Esophagus muscularis mucosa (tissue), 4 donors: ENCODE measurements at regions of chr9 and their contacts with region 1.

Region 1: GRCh38 chr9:69317894-69318293 is 7.1 kb upstream of the ENTREP1 start:
- DNase-seq: no peak
- H3K4me3 ChIP-seq: no peak overlapping the region
- H3K27ac ChIP-seq: no peak overlapping the region
- H3K4me1 ChIP-seq: peaks cover 0 to 9% (median 4%) of the 10 kb centered on the region in 4 donors
- H3K27me3 ChIP-seq: no peaks in the 10 kb centered on the region
- CTCF ChIP-seq: no peak
- EP300 ChIP-seq: no peak
- POLR2A ChIP-seq: no peak

Region 2: DNA sequence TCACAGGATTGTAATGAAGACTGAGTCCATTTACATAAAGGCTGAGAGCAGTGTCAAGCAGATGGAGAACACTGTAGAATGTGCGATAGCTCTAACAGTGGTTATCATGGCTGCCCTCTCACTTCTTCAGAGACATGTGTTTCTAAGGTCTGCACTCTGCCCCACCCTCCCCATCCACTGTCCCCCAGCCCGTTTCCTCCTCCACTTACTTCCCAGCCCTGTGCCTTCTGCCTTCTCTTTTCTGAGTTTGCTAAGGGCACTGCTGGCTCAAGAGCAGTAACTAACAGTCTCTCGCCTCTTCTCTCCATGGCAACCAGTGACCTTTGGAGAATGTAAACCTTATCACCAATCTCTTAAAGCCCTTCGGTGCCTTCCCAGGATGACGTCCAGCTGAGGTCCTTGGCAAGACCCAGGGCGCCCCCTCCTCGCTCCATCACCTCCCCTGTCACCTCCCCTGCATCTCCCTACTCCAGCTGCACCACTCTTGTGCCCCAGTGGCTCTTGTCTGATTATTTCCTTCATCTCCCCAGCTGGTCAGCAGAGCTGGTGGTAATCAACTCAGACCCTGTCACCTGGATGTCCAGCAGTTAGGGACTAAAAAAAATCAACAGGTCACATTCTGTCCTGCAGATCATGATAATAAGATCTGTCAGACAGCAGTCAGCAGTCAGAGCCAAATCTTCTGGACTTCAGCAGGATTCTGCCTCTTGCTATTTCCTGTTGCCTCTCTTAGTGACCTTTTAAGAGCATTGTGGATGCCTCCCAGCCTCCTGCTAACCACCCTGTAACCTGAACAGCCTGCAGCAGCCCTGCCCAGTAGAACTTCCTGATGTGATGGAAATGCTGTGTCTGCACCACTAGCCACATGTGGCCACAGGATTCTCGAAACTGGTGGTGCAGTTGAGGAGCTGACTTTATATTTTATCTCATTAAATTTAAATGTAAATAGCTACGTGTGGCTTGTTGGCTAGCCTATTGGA is 273.4 kb before region 1 on chr9:
- intact Hi-C with region 1: loop called (anchors 10 kb)
- DNase-seq: no peak
- H3K4me3 ChIP-seq: no peak overlapping the region
- H3K27ac ChIP-seq: peak overlapping the region in 2 of 4 donors; percentile 17 to 49
- H3K4me1 ChIP-seq: peaks cover 10 to 36% (median 19%) of the 10 kb centered on the region in 4 donors
- H3K27me3 ChIP-seq: no peaks in the 10 kb centered on the region
- CTCF ChIP-seq: no peak
- EP300 ChIP-seq: no peak
- POLR2A ChIP-seq: no peak

Region 3: DNA sequence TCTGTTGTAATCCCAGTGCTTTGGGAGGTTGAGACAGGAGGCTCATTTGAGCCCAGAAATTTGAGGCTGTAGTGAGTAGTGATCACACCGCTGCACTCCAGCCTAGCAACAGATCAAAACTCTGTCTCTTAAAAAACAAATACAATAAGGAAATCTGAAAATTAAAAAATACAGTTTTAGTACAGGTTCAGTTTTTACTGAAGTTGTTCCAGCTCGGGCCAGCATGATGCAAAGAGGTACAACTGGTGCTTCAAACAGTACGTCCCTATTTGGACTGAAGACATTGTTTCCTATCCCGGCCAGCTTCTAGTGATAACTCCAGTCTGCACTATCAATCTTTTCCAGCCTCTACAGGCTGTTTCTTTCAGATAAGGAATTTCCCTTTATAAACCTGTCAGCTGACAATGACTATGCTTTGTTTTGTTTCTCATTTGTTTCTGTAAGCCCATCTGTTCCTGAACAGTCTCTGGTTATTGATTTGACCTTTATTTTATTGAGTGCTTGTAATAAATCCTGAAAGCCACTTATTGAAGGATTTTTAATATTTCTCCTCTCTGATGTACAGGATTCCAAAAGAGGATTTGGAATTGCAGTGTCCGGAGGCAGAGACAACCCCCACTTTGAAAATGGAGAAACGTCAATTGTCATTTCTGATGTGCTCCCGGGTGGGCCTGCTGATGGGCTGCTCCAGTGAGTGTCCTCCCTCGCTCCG is 102.0 kb before region 1 on chr9:
- intact Hi-C with region 1: loop called (anchors 10 kb)
- DNase-seq: no peak
- H3K4me3 ChIP-seq: no peak overlapping the region
- H3K27ac ChIP-seq: peak overlapping the region in 1 of 4 donors; percentile 50
- H3K4me1 ChIP-seq: peaks cover 23 to 61% (median 58%) of the 10 kb centered on the region in 4 donors
- H3K27me3 ChIP-seq: no peaks in the 10 kb centered on the region
- CTCF ChIP-seq: no peak
- EP300 ChIP-seq: no peak
- POLR2A ChIP-seq: no peak